ENCODE measurements at regions of chr6 and their contacts with region 1.

Region 1: DNA sequence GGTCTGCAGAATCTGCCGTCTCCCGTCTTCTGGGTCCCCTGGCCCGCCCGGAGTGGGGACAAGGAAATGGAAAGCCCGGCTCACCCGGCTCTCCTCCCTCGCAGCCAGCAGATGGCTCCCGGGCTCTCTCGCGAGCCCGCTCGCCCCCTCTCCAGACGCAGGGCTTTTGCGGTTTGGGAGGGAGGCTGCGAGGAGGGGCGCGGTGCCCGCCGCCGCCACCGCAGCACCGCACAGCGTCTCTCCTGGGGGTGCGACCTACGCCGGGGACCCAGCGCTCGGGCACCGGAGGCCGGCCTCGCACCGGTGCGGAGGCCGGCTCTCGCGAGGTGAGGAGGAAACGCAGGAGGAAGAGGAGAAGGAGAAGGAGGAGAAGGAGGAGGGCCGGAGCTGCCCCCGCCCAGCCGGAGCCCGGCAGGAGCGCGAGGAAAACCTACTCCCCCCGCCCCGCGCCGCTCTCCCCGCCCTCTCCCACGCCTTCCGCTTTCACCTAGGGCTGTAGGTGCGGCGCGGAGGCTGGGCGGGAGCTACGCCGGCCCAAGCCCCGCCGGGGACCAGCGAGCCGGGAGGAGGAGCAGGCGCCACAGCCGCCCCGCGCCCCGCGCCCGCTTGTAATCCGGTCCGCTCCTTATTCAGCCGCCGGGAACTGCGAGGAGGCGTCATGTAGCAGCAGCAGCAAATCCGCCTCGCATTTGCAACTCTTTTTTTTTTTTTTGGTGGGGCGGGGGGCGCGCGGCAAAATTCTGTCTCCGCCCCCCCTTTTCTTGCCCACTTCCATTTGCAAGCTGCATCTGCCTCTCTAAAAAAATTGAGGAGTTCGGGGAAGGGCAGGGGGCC is at the start of gene CARMIL1:
- DNase-seq: peak; percentile 86
- ATAC-seq: peak; percentile 68
- H3K4me3 Mint-ChIP-seq: peak within 1 kb of the TSS; percentile 93
- H3K27ac Mint-ChIP-seq: peak within 1 kb of the TSS; percentile 93
- H3K4me1 Mint-ChIP-seq: peaks cover 44% of the 10 kb centered on the region
- H3K27me3 Mint-ChIP-seq: no peaks in the 10 kb centered on the region
- CTCF ChIP-seq: no peak
- total RNA-seq, gene CARMIL1: 35.1 to 37.6 TPM (median 36.2 TPM) in 3 replicates

Region 2: DNA sequence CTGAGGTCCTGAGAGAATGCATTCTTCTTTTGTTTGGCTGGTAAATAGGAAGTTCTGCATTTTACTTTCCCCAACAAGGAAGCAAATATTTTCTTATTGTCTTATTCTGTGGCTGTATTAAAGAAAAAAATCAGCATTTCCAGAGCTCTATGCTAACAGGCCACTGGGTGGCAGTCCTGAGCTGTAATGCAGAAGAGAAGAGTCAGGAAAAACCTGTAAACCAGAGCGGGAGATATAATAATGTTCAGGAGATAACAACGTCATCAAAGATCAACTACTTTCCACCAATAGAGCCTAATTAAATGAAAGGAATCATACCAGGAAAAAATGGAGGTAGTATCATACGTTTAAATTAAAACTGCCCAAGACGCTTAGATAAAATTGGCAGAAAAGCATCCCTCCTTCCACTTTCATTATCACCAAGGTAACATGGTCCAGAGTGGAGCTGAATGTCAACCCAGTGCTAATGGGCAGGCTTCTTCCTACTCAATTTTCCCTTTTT is 55.6 kb before region 1 on chr6:
- CTCF ChIA-PET with region 1: interaction called, 14 read pairs
- POLR2A ChIA-PET with region 1: no interaction called
- DNase-seq: peak; percentile 71
- ATAC-seq: peak; percentile 55
- H3K4me3 Mint-ChIP-seq: no peak overlapping the region
- H3K27ac Mint-ChIP-seq: no peak overlapping the region
- H3K4me1 Mint-ChIP-seq: peaks cover 23% of the 10 kb centered on the region
- H3K27me3 Mint-ChIP-seq: no peaks in the 10 kb centered on the region; the same call in 1 of the 2 replicates
- CTCF ChIP-seq: peak; percentile 69

Region 3: GRCh38 chr6:25342802-25343201 is 63.7 kb after region 1 on chr6:
- CTCF ChIA-PET with region 1: interaction called, 35 read pairs
- POLR2A ChIA-PET with region 1: no interaction called
- DNase-seq: no peak
- ATAC-seq: no peak
- H3K4me3 Mint-ChIP-seq: no peak overlapping the region
- H3K27ac Mint-ChIP-seq: peak overlapping the region; percentile 46; the same call in 1 of the 2 replicates
- H3K4me1 Mint-ChIP-seq: peaks cover 36% of the 10 kb centered on the region
- H3K27me3 Mint-ChIP-seq: no peaks in the 10 kb centered on the region
- CTCF ChIP-seq: no peak

Region 4: GRCh38 chr6:25449774-25450173 is 170.6 kb after region 1 on chr6:
- CTCF ChIA-PET with region 1: interaction called, 13 read pairs
- POLR2A ChIA-PET with region 1: no interaction called
- DNase-seq: peak; percentile 57
- ATAC-seq: peak; percentile 92
- H3K4me3 Mint-ChIP-seq: peak overlapping the region; percentile 53
- H3K27ac Mint-ChIP-seq: peak overlapping the region; percentile 96
- H3K4me1 Mint-ChIP-seq: peaks cover 44% of the 10 kb centered on the region
- H3K27me3 Mint-ChIP-seq: no peaks in the 10 kb centered on the region
- CTCF ChIP-seq: no peak

Region 5: DNA sequence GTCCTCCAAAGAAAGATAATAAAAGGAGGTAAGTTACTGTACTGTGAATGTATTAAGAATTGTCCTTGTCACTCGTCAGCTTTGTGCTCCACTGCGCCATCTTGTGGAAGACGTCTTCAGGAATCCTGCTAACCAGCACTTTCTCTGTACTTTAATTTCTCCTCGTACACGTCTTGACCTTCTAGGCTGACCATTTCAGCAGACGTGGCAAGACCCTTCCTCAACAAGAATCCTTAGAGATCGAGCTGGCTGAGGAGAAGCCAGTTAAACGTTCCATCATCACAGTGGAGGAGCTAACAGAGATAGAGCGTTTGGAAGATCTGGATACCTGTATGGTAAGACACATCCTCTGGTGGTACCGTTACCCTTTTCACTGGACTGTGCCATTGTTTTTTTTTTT is 277.4 kb after region 1 on chr6:
- CTCF ChIA-PET with region 1: interaction called, 15 read pairs
- POLR2A ChIA-PET with region 1: no interaction called
- DNase-seq: peak; percentile 87
- ATAC-seq: peak; percentile 82
- H3K4me3 Mint-ChIP-seq: no peak overlapping the region
- H3K27ac Mint-ChIP-seq: 0 out of 2 replicates have a peak overlapping the region, but pooled peaks have one; percentile 78
- H3K4me1 Mint-ChIP-seq: peaks cover 7% of the 10 kb centered on the region
- H3K27me3 Mint-ChIP-seq: no peaks in the 10 kb centered on the region
- CTCF ChIP-seq: peak; percentile 63